IMR-90 (cell line): ENCODE measurements at regions of chr1 and their contacts with region 1.

Region 1: GRCh38 chr1:116962987-116963639 is 38.4 kb upstream of the CD101 start:
- DNase-seq: no peak
- ATAC-seq: no peak
- H3K4me3 ChIP-seq: no peak overlapping the region
- H3K27ac ChIP-seq: no peak overlapping the region
- H3K4me1 ChIP-seq: no peaks in the 10 kb centered on the region
- H3K27me3 ChIP-seq: no peaks in the 10 kb centered on the region
- CTCF ChIP-seq: no peak
- POLR2A ChIP-seq: no peak
- RAD21 ChIP-seq: no peak

Region 2: DNA sequence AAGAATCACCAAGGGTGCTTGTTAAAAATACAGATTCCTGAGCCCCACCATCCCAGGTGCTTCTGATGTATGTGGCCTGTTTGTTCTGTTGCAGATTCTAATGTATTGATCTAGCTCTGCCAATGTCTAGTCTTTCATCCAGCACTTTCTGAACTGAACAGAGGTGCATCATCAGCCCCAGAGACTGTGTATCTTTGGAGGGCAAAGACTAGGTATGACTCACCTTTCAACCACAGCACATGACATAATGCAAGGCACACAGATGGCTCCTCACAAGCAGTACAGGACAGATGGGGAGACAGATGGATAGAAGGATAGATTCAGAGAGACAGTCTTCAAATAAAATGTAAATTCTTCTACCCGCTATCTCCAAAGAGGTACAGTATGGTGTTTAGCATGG is 424.6 kb before region 1 on chr1:
- CTCF ChIA-PET with region 1: interaction called, 10 read pairs
- POLR2A ChIA-PET with region 1: no interaction called
- dilution Hi-C with region 1: no loop called
- in situ Hi-C with region 1: no loop called
- intact Hi-C with region 1: no loop called
- DNase-seq: peak; percentile 73
- ATAC-seq: no peak
- H3K4me3 ChIP-seq: no peak overlapping the region
- H3K27ac ChIP-seq: no peak overlapping the region
- H3K4me1 ChIP-seq: peaks cover 2% of the 10 kb centered on the region; the same call in 1 of the 2 replicates
- H3K27me3 ChIP-seq: no peaks in the 10 kb centered on the region
- CTCF ChIP-seq: no peak
- POLR2A ChIP-seq: no peak
- RAD21 ChIP-seq: no peak

Region 3: GRCh38 chr1:117137316-117137855 is 174.3 kb after region 1 on chr1:
- CTCF ChIA-PET with region 1: no interaction called
- POLR2A ChIA-PET with region 1: no interaction called
- dilution Hi-C with region 1: no loop called
- in situ Hi-C with region 1: no loop called
- intact Hi-C with region 1: no loop called
- DNase-seq: no peak
- ATAC-seq: no peak
- H3K4me3 ChIP-seq: no peak overlapping the region
- H3K27ac ChIP-seq: no peak overlapping the region
- H3K4me1 ChIP-seq: peaks cover 3% of the 10 kb centered on the region
- H3K27me3 ChIP-seq: no peaks in the 10 kb centered on the region
- CTCF ChIP-seq: no peak
- POLR2A ChIP-seq: no peak
- RAD21 ChIP-seq: no peak